ENCODE measurements at regions of chr14 and their contacts with region 1.

Region 1: GRCh38 chr14:91144425-91145145 is 30.7 kb downstream of the DGLUCY start:
- DNase-seq: peak; percentile 98
- H3K4me3 ChIP-seq: no peak overlapping the region
- H3K27ac ChIP-seq: peak overlapping the region; percentile 89
- H3K4me1 ChIP-seq: peaks cover 80% of the 10 kb centered on the region
- H3K27me3 ChIP-seq: no peaks in the 10 kb centered on the region
- CTCF ChIP-seq: no peak

Region 2: GRCh38 chr14:91084516-91084915 is 60.1 kb before region 1 on chr14:
- CTCF ChIA-PET with region 1: no interaction called
- POLR2A ChIA-PET with region 1: no interaction called
- intact Hi-C with region 1: loop called (anchors 2 kb)
- DNase-seq: peak; percentile 98
- H3K4me3 ChIP-seq: no peak overlapping the region
- H3K27ac ChIP-seq: peak overlapping the region; percentile 73
- H3K4me1 ChIP-seq: peaks cover 19% of the 10 kb centered on the region
- H3K27me3 ChIP-seq: no peaks in the 10 kb centered on the region
- CTCF ChIP-seq: no peak

Region 3: DNA sequence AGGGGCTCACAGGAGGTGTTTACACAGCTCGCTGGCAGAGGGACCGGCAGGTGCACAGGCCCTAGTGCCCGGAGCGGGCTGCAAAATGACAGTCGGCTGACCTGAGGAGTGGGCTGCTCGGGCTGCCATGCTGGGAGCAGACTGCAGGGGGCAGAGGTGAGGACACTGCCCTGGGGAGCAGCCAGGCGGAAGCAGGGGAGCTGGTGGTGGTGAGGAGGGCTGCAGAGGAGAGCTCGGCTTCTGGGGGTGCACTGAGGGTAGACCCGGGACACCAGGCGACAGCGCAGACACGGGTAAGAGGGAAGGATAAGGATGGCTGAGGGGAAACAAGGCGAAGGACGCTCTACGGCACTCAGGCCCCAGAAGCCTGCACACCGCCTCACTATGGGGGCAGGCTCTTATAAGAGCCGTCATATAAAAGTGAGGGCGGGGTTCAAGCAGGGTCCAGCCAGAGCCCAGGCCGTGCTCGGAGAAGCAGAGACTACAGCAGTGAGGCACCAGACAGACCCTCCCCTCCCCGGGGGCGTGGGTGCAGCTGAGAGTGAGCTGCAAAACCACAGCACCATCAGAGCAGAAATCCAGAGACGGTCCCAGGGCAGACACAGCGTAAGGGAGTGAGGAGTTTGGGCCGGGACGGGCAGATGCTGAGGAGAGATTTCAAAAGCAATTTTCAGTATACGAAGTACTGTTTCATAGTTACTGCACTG is 210.5 kb after region 1 on chr14:
- CTCF ChIA-PET with region 1: no interaction called
- POLR2A ChIA-PET with region 1: no interaction called
- intact Hi-C with region 1: loop called (anchors 1 kb)
- DNase-seq: no peak
- H3K4me3 ChIP-seq: no peak overlapping the region
- H3K27ac ChIP-seq: no peak overlapping the region
- H3K4me1 ChIP-seq: peaks cover 53% of the 10 kb centered on the region
- H3K27me3 ChIP-seq: no peaks in the 10 kb centered on the region
- CTCF ChIP-seq: peak; percentile 53